WTC11 (cell line): ENCODE measurements at regions of chr13 and their contacts with region 1.

Region 1: DNA sequence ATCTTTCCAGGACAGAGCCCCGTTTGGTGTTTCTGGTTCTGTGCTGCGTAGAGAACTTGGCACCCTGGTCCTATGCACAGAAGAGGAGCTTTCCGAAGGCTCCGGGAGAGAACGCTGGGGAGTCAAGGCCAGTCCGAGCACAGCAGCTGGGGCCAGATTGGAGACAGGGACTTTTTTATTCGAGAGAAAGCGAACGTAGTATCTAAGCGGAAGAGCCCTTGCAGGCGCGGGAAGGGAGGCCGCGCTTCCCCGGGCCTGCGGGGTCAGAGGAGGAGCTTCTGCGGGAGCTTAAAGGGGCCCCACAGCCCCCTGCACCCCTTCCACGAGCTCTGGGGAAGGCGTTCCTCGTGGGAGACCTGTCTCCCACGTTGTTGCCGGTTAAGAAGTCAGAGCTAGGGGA is 48.6 kb upstream of the ARHGEF7 start:
- DNase-seq: no peak
- ATAC-seq: peak; percentile 8
- H3K4me3 Mint-ChIP-seq: peak overlapping the region; percentile 72
- H3K27ac Mint-ChIP-seq: no peak overlapping the region; the same call in 1 of the 2 replicates
- H3K4me1 Mint-ChIP-seq: peaks cover 43% of the 10 kb centered on the region
- H3K27me3 Mint-ChIP-seq: peaks cover 39% of the 10 kb centered on the region
- CTCF ChIP-seq: no peak

Region 2: DNA sequence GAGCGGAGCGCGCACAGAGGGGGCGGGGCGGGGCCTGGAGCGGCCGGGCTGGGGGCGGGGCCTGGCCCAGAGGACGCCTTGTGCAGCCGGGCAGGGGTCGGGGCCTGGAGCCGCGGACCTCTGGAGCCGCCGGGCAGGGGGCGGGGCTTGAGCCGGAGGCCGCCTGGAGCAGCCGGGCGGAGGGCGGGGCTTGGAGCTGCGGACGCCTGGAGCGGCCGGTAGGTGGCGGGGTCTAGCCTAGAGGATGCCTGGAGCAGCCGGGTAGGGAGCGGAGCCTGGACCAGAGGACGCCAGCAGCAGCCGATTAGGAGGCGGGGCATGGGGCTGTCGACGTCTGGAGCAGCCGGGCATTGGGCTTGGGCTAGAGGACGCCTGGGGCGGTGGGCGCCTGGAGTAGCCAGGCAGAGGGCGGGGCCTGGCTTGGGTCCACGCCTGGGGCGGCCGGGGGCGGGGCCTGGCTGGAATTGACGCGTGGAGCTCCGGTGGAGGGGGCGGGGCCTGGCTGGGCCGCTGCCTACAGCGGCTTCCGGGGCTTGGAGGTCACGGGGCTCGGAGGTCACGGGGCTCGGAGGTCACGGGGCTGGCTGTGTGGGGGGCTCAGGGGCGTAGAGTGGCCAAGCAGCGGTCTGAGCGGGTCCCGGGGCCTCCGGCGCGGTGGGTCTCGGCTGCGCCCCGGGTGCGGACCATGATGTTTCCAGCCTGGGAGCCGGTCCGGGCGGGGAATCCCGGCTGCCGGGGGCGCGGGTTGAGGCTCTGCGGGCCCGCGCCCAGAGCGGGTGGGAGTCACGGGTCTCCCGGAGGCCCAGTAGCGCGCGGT is 151.3 kb before region 1 on chr13 and contains the start of gene ANKRD10:
- CTCF ChIA-PET with region 1: interaction called, 14 read pairs
- POLR2A ChIA-PET with region 1: no interaction called
- DNase-seq: peak; percentile 99
- ATAC-seq: peak; percentile 93
- H3K4me3 Mint-ChIP-seq: peak within 1 kb of the TSS; percentile 92
- H3K27ac Mint-ChIP-seq: peak within 1 kb of the TSS; percentile 92
- H3K4me1 Mint-ChIP-seq: peaks cover 41% of the 10 kb centered on the region
- H3K27me3 Mint-ChIP-seq: no peaks in the 10 kb centered on the region
- CTCF ChIP-seq: peak; percentile 58; the same call in 1 of the 2 replicates
- total RNA-seq, gene ANKRD10: 176 to 219 TPM (median 191 TPM) in 3 replicates

Region 3: DNA sequence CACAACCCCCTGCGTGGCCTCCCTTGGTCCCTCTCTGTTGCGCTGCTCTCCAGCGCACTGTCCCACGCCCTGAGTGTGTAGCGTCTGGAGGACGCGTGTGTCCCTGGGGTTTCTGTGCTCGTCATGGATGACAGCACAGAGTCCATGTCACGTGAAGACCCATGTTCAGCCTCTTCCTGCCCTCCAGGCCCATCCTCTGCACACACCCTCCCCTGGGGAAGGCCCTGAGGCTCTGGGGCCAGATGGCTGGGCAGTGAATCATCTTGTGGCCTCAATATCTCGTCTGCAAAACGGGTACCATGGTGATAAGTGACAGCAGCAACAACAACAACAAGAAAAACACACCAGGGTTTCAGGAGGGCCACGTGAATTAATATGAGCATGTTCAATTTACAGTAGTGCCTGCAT is 23.0 kb before region 1 on chr13:
- CTCF ChIA-PET with region 1: no interaction called
- POLR2A ChIA-PET with region 1: no interaction called
- DNase-seq: no peak
- ATAC-seq: no peak
- H3K4me3 Mint-ChIP-seq: no peak overlapping the region
- H3K27ac Mint-ChIP-seq: no peak overlapping the region
- H3K4me1 Mint-ChIP-seq: no peaks in the 10 kb centered on the region
- H3K27me3 Mint-ChIP-seq: peaks cover 4% of the 10 kb centered on the region; the same call in 1 of the 2 replicates
- CTCF ChIP-seq: no peak

Region 4: GRCh38 chr13:111115965-111116500 is 49.5 kb after region 1 on chr13:
- CTCF ChIA-PET with region 1: interaction called, 10 read pairs
- POLR2A ChIA-PET with region 1: no interaction called
- DNase-seq: peak; percentile 34
- ATAC-seq: peak; percentile 9
- H3K4me3 Mint-ChIP-seq: peak overlapping the region; percentile 83
- H3K27ac Mint-ChIP-seq: no peak overlapping the region
- H3K4me1 Mint-ChIP-seq: peaks cover 8% of the 10 kb centered on the region
- H3K27me3 Mint-ChIP-seq: peaks cover 72% of the 10 kb centered on the region
- CTCF ChIP-seq: no peak

Region 5: GRCh38 chr13:111131611-111132010 is 65.1 kb after region 1 on chr13:
- CTCF ChIA-PET with region 1: no interaction called
- POLR2A ChIA-PET with region 1: no interaction called
- DNase-seq: no peak
- ATAC-seq: no peak
- H3K4me3 Mint-ChIP-seq: no peak overlapping the region
- H3K27ac Mint-ChIP-seq: no peak overlapping the region
- H3K4me1 Mint-ChIP-seq: no peaks in the 10 kb centered on the region
- H3K27me3 Mint-ChIP-seq: peaks cover 11% of the 10 kb centered on the region
- CTCF ChIP-seq: no peak

Region 6: GRCh38 chr13:111156421-111156820 is 89.9 kb after region 1 on chr13:
- CTCF ChIA-PET with region 1: interaction called, 11 read pairs
- POLR2A ChIA-PET with region 1: no interaction called
- DNase-seq: no peak
- ATAC-seq: no peak
- H3K4me3 Mint-ChIP-seq: no peak overlapping the region
- H3K27ac Mint-ChIP-seq: no peak overlapping the region
- H3K4me1 Mint-ChIP-seq: peaks cover 16% of the 10 kb centered on the region
- H3K27me3 Mint-ChIP-seq: no peaks in the 10 kb centered on the region
- CTCF ChIP-seq: no peak

Region 7: GRCh38 chr13:111216166-111216960 is 149.8 kb after region 1 on chr13:
- CTCF ChIA-PET with region 1: interaction called, 11 read pairs
- POLR2A ChIA-PET with region 1: no interaction called
- DNase-seq: peak; percentile 65
- ATAC-seq: peak; percentile 40
- H3K4me3 Mint-ChIP-seq: no peak overlapping the region
- H3K27ac Mint-ChIP-seq: 0 out of 2 replicates have a peak overlapping the region, but pooled peaks have one; percentile 48
- H3K4me1 Mint-ChIP-seq: peaks cover 83% of the 10 kb centered on the region
- H3K27me3 Mint-ChIP-seq: no peaks in the 10 kb centered on the region
- CTCF ChIP-seq: 0 out of 2 replicates have a peak, but pooled peaks have one; percentile 20

Region 8: GRCh38 chr13:111976474-111977178 is 910.1 kb after region 1 on chr13:
- CTCF ChIA-PET with region 1: no interaction called
- POLR2A ChIA-PET with region 1: no interaction called
- DNase-seq: no peak
- ATAC-seq: no peak
- H3K4me3 Mint-ChIP-seq: no peak overlapping the region
- H3K27ac Mint-ChIP-seq: no peak overlapping the region
- H3K4me1 Mint-ChIP-seq: peaks cover 23% of the 10 kb centered on the region
- H3K27me3 Mint-ChIP-seq: peaks cover 17% of the 10 kb centered on the region
- CTCF ChIP-seq: no peak